ENCODE measurements at regions of chr14 and their contacts with region 1.

Region 1: GRCh38 chr14:44961604-44962333 is at the starts of genes KLHL28 and TOGARAM1:
- DNase-seq: peak; percentile 98
- H3K4me3 Mint-ChIP-seq: no peak within 1 kb of the TSS
- H3K27ac Mint-ChIP-seq: no peak within 1 kb of the TSS
- H3K4me1 Mint-ChIP-seq: peaks cover 52% of the 10 kb centered on the region
- H3K27me3 Mint-ChIP-seq: no peaks in the 10 kb centered on the region
- total RNA-seq, gene KLHL28: 10.8 to 12.7 TPM
- total RNA-seq, gene TOGARAM1: 3.1 to 3.3 TPM

Region 2: GRCh38 chr14:44886860-44887595 is 74.7 kb before region 1 on chr14:
- CTCF ChIA-PET with region 1: no interaction called
- intact Hi-C with region 1: no loop called
- DNase-seq: no peak
- H3K4me3 Mint-ChIP-seq: no peak overlapping the region
- H3K27ac Mint-ChIP-seq: no peak overlapping the region
- H3K4me1 Mint-ChIP-seq: peaks cover 1% of the 10 kb centered on the region
- H3K27me3 Mint-ChIP-seq: no peaks in the 10 kb centered on the region

Region 3: DNA sequence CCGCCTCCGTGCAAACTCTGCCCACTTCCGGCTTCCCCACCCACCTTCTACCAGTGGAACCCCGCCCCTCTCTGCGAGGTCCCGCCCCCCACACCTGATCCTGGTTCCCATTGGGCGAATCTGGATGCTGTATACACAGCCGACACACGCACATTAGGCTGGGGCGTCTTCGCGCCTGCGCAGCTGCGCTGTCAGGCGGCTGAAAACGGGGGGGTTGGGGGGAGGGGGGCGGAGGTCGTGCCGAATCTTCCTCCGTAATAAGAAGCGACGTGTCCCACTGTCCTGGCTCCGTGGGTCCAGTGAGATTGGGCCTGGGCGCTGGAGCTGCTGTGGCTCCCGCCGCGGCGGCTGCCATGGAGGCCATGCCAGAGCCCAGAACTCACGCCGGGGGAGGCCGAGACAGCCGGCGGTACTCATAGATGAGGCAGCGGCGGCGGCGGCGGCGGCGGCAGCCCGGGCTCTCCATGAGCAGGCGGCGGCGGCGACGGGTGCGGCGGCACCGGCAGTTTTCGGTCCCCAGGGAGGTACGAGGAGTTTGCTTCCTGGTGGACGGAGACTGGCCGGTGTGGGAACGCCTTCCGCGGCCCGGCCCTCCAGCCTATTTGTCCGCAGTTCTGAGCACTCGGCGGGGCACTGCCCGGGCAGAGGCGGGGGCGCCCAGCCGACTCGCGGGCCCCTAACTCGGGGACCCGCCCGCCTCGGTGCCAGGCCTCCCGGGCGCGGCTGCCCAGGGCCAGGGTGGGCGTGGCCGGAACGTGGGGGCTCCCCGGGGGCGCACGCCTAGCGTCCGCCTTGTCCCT is 64.5 kb before region 1 on chr14:
- CTCF ChIA-PET with region 1: interaction called, 4 read pairs
- intact Hi-C with region 1: loop called (anchors 1 kb)
- DNase-seq: peak; percentile 99
- H3K4me3 Mint-ChIP-seq: peak overlapping the region; percentile 89
- H3K27ac Mint-ChIP-seq: peak overlapping the region; percentile 83
- H3K4me1 Mint-ChIP-seq: peaks cover 13% of the 10 kb centered on the region
- H3K27me3 Mint-ChIP-seq: no peaks in the 10 kb centered on the region

Region 4: GRCh38 chr14:44982594-44982993 is 20.8 kb after region 1 on chr14:
- CTCF ChIA-PET with region 1: no interaction called
- intact Hi-C with region 1: loop called (anchors 1 kb)
- DNase-seq: no peak
- H3K4me3 Mint-ChIP-seq: no peak overlapping the region
- H3K27ac Mint-ChIP-seq: no peak overlapping the region
- H3K4me1 Mint-ChIP-seq: peaks cover 20% of the 10 kb centered on the region
- H3K27me3 Mint-ChIP-seq: no peaks in the 10 kb centered on the region

Region 5: GRCh38 chr14:45089813-45090212 is 128.0 kb after region 1 on chr14:
- CTCF ChIA-PET with region 1: no interaction called
- intact Hi-C with region 1: loop called (anchors 1 kb)
- DNase-seq: peak; percentile 44
- H3K4me3 Mint-ChIP-seq: no peak overlapping the region
- H3K27ac Mint-ChIP-seq: peak overlapping the region; percentile 3
- H3K4me1 Mint-ChIP-seq: peaks cover 76% of the 10 kb centered on the region
- H3K27me3 Mint-ChIP-seq: no peaks in the 10 kb centered on the region

Region 6: GRCh38 chr14:45134051-45134958 is 172.5 kb after region 1 on chr14 and contains the start of gene FKBP3:
- CTCF ChIA-PET with region 1: interaction called, 3 read pairs
- intact Hi-C with region 1: loop called (anchors 1 kb)
- DNase-seq: peak; percentile 97
- H3K4me3 Mint-ChIP-seq: peak within 1 kb of the TSS; percentile 99
- H3K27ac Mint-ChIP-seq: peak within 1 kb of the TSS; percentile 98
- H3K4me1 Mint-ChIP-seq: peaks cover 37% of the 10 kb centered on the region
- H3K27me3 Mint-ChIP-seq: no peaks in the 10 kb centered on the region
- total RNA-seq, gene FKBP3: 47.6 to 50.8 TPM

Region 7: GRCh38 chr14:45222485-45223262 is 260.9 kb after region 1 on chr14:
- CTCF ChIA-PET with region 1: no interaction called
- intact Hi-C with region 1: no loop called
- DNase-seq: no peak
- H3K4me3 Mint-ChIP-seq: no peak overlapping the region
- H3K27ac Mint-ChIP-seq: peak overlapping the region; percentile 8
- H3K4me1 Mint-ChIP-seq: peaks cover 14% of the 10 kb centered on the region
- H3K27me3 Mint-ChIP-seq: no peaks in the 10 kb centered on the region

Measured in activated naive CD4-positive, alpha-beta T cell treated with anti-CD3 and anti-CD28 coated beads for 36 hours (primary cell).